ENCODE measurements at regions of chr11 and their contacts with region 1.

Region 1: GRCh38 chr11:133821776-133822175 is 23.5 kb downstream of the SPATA19 start:
- DNase-seq: peak; percentile 83
- ATAC-seq: peak; percentile 93
- H3K4me3 Mint-ChIP-seq: no peak overlapping the region
- H3K27ac Mint-ChIP-seq: no peak overlapping the region
- H3K4me1 Mint-ChIP-seq: peaks cover 6% of the 10 kb centered on the region
- H3K27me3 Mint-ChIP-seq: no peaks in the 10 kb centered on the region; the same call in 1 of the 2 replicates
- CTCF ChIP-seq: peak; percentile 81

Region 2: DNA sequence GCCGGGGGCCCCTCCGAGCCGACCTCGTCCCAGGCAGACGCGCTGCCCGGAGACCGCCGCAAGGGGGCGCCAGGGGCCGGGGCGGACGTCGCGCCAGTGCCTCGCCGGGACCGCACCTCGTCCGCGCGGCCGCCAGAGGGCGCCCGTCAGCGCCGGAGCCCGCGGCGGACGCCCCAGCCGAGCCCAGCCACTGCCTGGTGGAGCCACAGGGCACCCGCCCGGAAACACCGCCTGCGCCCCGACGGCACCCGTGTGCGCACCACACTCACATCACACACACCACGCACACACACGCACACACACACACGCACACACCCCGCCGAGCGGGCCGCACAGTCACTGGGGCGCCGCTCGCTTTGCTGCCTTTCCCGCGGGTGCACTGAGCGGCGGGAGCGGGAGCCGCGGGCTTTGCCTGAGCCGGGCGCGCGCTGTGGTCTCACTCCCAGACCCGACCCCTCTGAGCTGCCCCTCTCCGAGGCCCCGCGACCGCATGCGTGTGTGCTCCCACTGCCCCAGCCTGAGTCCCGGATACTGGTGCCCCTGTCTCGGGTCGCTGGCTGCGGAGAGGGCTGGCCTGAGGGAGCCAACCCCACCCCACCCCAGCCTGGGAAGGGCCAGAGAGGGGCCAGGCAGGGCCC is 738.8 kb before region 1 on chr11:
- CTCF ChIA-PET with region 1: interaction called, 29 read pairs
- POLR2A ChIA-PET with region 1: no interaction called
- DNase-seq: peak; percentile 86
- ATAC-seq: peak; percentile 78
- H3K4me3 Mint-ChIP-seq: peak overlapping the region; percentile 71
- H3K27ac Mint-ChIP-seq: no peak overlapping the region
- H3K4me1 Mint-ChIP-seq: peaks cover 31% of the 10 kb centered on the region
- H3K27me3 Mint-ChIP-seq: peaks cover 22% of the 10 kb centered on the region
- CTCF ChIP-seq: peak; percentile 98

Region 3: GRCh38 chr11:133163463-133164419 is 658.0 kb before region 1 on chr11:
- CTCF ChIA-PET with region 1: interaction called, 11 read pairs
- POLR2A ChIA-PET with region 1: no interaction called
- DNase-seq: no peak
- ATAC-seq: peak; percentile 66
- H3K4me3 Mint-ChIP-seq: no peak overlapping the region
- H3K27ac Mint-ChIP-seq: no peak overlapping the region
- H3K4me1 Mint-ChIP-seq: peaks cover 33% of the 10 kb centered on the region
- H3K27me3 Mint-ChIP-seq: no peaks in the 10 kb centered on the region
- CTCF ChIP-seq: peak; percentile 63

Region 4: DNA sequence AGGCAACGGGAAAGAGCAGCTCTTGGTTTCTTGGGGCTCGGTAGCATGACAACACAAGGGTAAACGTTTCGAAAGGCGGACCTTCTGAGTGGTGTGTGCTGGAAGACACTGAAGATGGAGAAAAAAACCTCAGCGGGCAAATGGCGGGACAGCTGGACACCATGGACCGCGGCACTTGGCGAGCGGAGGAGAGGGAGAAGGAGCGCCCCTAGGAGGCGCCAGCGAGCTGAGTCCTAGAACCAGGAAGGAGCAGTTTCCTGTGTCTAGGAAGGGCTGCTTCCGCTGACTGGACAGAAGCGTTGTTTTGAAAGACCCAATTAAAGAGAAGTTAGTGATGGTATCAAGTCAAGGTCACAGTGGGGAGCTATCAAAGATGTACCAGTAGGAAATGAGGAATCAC is 245.4 kb before region 1 on chr11:
- CTCF ChIA-PET with region 1: interaction called, 33 read pairs
- POLR2A ChIA-PET with region 1: no interaction called
- DNase-seq: peak; percentile 86
- ATAC-seq: peak; percentile 69
- H3K4me3 Mint-ChIP-seq: no peak overlapping the region
- H3K27ac Mint-ChIP-seq: no peak overlapping the region
- H3K4me1 Mint-ChIP-seq: peaks cover 31% of the 10 kb centered on the region
- H3K27me3 Mint-ChIP-seq: no peaks in the 10 kb centered on the region; the same call in 1 of the 2 replicates
- CTCF ChIP-seq: peak; percentile 78

Region 5: GRCh38 chr11:133681901-133682300 is 139.9 kb before region 1 on chr11:
- CTCF ChIA-PET with region 1: interaction called, 15 read pairs
- POLR2A ChIA-PET with region 1: no interaction called
- DNase-seq: peak; percentile 25
- ATAC-seq: peak; percentile 78
- H3K4me3 Mint-ChIP-seq: no peak overlapping the region
- H3K27ac Mint-ChIP-seq: no peak overlapping the region
- H3K4me1 Mint-ChIP-seq: peaks cover 12% of the 10 kb centered on the region
- H3K27me3 Mint-ChIP-seq: peaks cover 3% of the 10 kb centered on the region; the same call in 1 of the 2 replicates
- CTCF ChIP-seq: no peak

Region 6: GRCh38 chr11:133809569-133810491 is 11.9 kb before region 1 on chr11:
- CTCF ChIA-PET with region 1: interaction called, 61 read pairs
- POLR2A ChIA-PET with region 1: no interaction called
- DNase-seq: no peak
- ATAC-seq: peak; percentile 65
- H3K4me3 Mint-ChIP-seq: no peak overlapping the region
- H3K27ac Mint-ChIP-seq: no peak overlapping the region
- H3K4me1 Mint-ChIP-seq: no peaks in the 10 kb centered on the region
- H3K27me3 Mint-ChIP-seq: no peaks in the 10 kb centered on the region
- CTCF ChIP-seq: no peak

Measured in WTC11 (cell line).